MCF 10A (cell line): ENCODE measurements at regions of chr2 and their contacts with region 1.

Region 1: GRCh38 chr2:79041032-79041448 is 15.5 kb downstream of the REG3G start:
- DNase-seq: no peak
- H3K4me3 Mint-ChIP-seq: no peak overlapping the region
- H3K27ac Mint-ChIP-seq: no peak overlapping the region
- H3K4me1 Mint-ChIP-seq: no peaks in the 10 kb centered on the region
- H3K27me3 Mint-ChIP-seq: no peaks in the 10 kb centered on the region
- CTCF ChIP-seq: peak; percentile 34

Region 2: GRCh38 chr2:79210274-79210917 is 169.4 kb after region 1 on chr2:
- CTCF ChIA-PET with region 1: interaction called, 17 read pairs
- POLR2A ChIA-PET with region 1: no interaction called
- intact Hi-C with region 1: no loop called
- DNase-seq: no peak
- H3K4me3 Mint-ChIP-seq: no peak overlapping the region
- H3K27ac Mint-ChIP-seq: no peak overlapping the region
- H3K4me1 Mint-ChIP-seq: no peaks in the 10 kb centered on the region
- H3K27me3 Mint-ChIP-seq: no peaks in the 10 kb centered on the region
- CTCF ChIP-seq: no peak

Region 3: DNA sequence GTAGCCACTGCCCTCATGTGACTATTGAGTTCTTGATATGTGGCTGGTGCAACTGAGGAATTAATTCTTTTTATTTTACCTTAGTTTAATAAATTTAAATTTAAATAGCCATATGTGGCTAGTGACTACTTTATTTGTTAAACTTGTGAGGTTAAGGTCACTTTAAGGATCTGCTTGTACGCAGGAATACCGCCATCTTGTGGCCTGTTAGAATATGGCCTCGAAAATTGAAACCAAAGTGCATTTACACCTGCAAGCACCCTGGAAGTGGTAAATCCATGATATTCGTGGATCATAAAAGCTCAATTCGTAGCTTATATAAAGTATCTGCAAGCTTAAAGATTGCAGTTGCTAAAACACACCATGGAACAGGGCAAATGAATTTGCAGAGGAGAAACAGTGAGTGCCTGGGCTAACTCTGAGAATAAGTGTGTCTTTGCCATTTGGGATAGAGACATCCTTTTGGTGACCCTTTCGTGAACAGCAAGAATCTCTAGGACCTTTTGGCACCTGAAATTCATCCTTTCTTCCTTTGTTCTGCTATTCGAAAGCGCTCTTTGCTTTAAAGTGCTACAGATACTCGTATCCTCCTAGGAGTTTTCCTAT is 178.4 kb after region 1 on chr2:
- CTCF ChIA-PET with region 1: interaction called, 35 read pairs
- POLR2A ChIA-PET with region 1: no interaction called
- intact Hi-C with region 1: loop called (anchors 1 kb)
- DNase-seq: peak; percentile 40
- H3K4me3 Mint-ChIP-seq: no peak overlapping the region
- H3K27ac Mint-ChIP-seq: no peak overlapping the region
- H3K4me1 Mint-ChIP-seq: peaks cover 18% of the 10 kb centered on the region
- H3K27me3 Mint-ChIP-seq: no peaks in the 10 kb centered on the region
- CTCF ChIP-seq: peak; percentile 77